ENCODE measurements at regions of chr10 and their contacts with region 1.

Region 1: DNA sequence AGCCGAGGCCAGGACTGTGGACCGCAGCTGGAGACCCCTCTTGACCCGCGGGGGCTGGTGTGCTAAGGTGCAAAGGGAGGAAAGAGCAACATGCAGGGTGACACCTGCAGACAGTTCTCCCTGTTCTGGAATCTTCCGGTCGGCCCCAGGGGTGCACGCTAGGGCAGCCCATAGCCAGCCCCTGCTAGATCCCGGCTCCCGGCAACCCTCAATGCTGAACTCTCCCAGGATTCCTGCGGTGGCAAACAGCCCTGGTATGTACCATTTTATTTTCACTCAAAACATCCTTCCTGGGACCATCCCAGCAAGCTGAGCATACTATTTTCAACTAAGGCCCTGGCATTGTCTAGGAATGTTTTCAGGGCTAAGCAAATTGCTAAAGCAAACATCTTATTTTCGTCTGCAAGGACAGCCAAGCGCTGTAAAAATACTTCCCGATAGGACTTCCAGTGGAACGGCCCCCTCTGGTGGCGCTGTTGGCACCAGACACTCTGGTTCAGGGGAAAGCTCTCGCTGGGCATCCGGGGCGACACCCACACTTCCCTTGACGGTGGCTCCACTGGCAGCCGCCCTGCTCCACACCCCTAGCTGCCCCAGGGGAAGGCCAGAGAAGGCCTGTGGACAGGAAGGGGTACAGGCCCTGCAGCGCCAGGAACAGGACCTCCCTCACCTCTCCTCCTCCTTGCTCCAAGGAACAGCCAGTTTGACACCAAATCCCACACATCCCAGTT is 99.4 kb downstream of the CTBP2 start:
- H3K4me3 ChIP-seq: no peak overlapping the region
- H3K27ac ChIP-seq: no peak overlapping the region
- H3K4me1 ChIP-seq: peaks cover 27% of the 10 kb centered on the region
- CTCF ChIP-seq: peak; percentile 67

Region 2: GRCh38 chr10:124560377-124561105 is 500.4 kb before region 1 on chr10:
- CTCF ChIA-PET with region 1: no interaction called
- POLR2A ChIA-PET with region 1: no interaction called
- H3K4me3 ChIP-seq: no peak overlapping the region
- H3K27ac ChIP-seq: no peak overlapping the region
- H3K4me1 ChIP-seq: no peaks in the 10 kb centered on the region
- CTCF ChIP-seq: no peak

Region 3: GRCh38 chr10:125048101-125048864 is 12.7 kb before region 1 on chr10:
- CTCF ChIA-PET with region 1: interaction called, 16 read pairs
- POLR2A ChIA-PET with region 1: interaction called, 3 read pairs
- H3K4me3 ChIP-seq: no peak overlapping the region
- H3K27ac ChIP-seq: no peak overlapping the region
- H3K4me1 ChIP-seq: peaks cover 7% of the 10 kb centered on the region; the same call in 1 of the 2 replicates
- CTCF ChIP-seq: peak; percentile 87